ENCODE measurements at regions of chr12 and their contacts with region 1.

Region 1: DNA sequence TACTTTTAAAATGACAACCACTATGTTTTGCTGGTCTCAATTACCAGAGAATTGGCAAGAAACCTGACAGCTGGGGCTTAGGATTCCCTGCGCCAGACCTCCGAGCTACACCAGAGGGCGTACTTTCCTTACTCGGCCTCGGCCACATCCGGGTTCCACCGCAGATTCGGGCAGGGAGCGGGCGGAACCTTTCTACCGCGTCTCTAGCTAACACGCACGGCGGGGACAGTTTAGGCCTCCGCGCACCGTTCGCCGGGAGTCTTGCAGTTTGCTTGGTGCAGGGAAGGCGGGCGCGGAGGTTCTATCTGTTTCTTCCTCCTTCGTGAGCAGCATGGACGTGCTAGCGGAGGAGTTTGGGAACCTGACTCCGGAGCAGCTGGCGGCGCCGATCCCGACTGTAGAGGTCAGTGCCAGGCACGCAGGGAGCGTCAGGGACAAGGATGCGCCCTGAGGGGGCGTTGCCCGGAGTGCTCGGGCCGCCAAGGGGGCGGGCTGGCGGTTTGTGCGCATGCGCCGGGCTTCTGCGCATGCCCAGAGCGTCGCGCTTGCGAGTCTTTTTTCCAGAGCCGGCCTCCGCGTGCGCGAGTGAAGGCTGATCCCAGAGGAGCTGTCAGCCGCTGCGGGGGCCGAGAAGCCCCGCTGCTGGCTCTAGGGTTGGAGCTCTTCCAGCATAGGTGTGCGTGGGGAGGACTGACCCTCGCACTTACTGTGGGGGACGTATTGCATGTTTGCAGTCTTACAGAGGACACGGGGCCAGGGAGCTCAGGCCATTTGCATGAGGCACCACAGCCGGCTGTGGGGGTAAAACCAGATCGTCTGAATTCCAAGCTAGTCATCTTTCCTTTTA is at the start of gene POLR3B:
- DNase-seq: peak in 1 of 2 donors; percentile 95
- H3K4me3 ChIP-seq: peak within 1 kb of the TSS; percentile 53 to 56
- H3K27ac ChIP-seq: peak within 1 kb of the TSS; percentile 75
- H3K4me1 ChIP-seq: peaks cover 16% of the 10 kb centered on the region
- H3K27me3 ChIP-seq: no peaks in the 10 kb centered on the region
- CTCF ChIP-seq: peak in 2 of 3 experiments; percentile 79
- POLR2A ChIP-seq: peak; percentile 29 to 48
- total RNA-seq, gene POLR3B: 10.1 TPM

Region 2: GRCh38 chr12:104966677-104967076 is 1391.1 kb before region 1 on chr12:
- intact Hi-C with region 1: loop called (anchors 5 kb)
- DNase-seq: no peak
- H3K4me3 ChIP-seq: no peak overlapping the region
- H3K27ac ChIP-seq: no peak overlapping the region
- H3K4me1 ChIP-seq: no peaks in the 10 kb centered on the region
- H3K27me3 ChIP-seq: no peaks in the 10 kb centered on the region
- CTCF ChIP-seq: no peak
- POLR2A ChIP-seq: no peak

Region 3: DNA sequence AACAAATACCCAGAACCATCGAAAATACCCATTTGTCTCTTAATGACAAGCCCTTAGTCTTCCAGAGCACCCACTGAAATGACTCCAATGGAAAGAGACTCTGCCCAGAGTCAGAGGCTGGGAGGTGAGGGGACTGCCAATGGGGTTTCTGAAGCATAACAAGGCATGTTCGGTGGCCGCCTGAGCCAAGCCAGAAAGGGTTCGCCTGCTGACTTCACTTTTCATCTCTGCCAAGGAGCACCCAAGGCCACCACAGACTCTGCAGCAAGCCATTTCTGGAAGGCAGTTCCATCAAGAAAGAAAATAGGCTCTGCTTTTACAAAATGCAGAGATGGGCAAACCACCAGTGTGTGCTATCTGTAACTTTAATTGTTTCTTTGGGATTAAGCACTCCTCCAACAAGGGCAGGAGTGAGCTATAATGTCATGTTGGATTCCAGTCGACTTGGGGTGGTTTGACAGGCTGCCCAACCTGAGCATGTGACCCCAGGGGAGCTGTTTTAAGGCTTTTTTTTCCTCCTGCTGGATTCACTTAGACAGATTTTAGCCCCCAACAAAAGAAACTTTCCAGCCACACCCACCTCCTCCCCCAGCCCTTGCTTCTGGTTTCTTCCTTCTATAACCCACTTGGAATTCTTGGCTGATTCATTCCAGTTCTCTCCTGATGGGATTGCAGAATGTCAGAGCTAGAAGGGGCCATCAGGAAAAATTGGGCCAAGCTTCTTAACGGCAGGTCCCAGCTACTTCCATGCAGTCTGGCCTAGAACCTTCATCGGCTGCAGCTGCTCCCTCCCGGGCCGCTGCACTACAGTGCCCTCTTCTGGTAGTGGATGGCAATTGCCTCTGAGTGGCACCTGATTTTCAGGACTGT is 134.1 kb before region 1 on chr12:
- intact Hi-C with region 1: no loop called
- DNase-seq: peak in 1 of 2 donors; percentile 86
- H3K4me3 ChIP-seq: no peak overlapping the region
- H3K27ac ChIP-seq: peak overlapping the region; percentile 66
- H3K4me1 ChIP-seq: peaks cover 28% of the 10 kb centered on the region
- H3K27me3 ChIP-seq: no peaks in the 10 kb centered on the region
- CTCF ChIP-seq: peak; percentile 66 to 94 (median 84)
- POLR2A ChIP-seq: no peak

Region 4: GRCh38 chr12:106282457-106283097 is 75.2 kb before region 1 on chr12:
- intact Hi-C with region 1: no loop called
- DNase-seq: no peak
- H3K4me3 ChIP-seq: no peak overlapping the region
- H3K27ac ChIP-seq: no peak overlapping the region
- H3K4me1 ChIP-seq: no peaks in the 10 kb centered on the region
- H3K27me3 ChIP-seq: no peaks in the 10 kb centered on the region
- CTCF ChIP-seq: peak; percentile 36 to 73 (median 70)
- POLR2A ChIP-seq: no peak

Region 5: DNA sequence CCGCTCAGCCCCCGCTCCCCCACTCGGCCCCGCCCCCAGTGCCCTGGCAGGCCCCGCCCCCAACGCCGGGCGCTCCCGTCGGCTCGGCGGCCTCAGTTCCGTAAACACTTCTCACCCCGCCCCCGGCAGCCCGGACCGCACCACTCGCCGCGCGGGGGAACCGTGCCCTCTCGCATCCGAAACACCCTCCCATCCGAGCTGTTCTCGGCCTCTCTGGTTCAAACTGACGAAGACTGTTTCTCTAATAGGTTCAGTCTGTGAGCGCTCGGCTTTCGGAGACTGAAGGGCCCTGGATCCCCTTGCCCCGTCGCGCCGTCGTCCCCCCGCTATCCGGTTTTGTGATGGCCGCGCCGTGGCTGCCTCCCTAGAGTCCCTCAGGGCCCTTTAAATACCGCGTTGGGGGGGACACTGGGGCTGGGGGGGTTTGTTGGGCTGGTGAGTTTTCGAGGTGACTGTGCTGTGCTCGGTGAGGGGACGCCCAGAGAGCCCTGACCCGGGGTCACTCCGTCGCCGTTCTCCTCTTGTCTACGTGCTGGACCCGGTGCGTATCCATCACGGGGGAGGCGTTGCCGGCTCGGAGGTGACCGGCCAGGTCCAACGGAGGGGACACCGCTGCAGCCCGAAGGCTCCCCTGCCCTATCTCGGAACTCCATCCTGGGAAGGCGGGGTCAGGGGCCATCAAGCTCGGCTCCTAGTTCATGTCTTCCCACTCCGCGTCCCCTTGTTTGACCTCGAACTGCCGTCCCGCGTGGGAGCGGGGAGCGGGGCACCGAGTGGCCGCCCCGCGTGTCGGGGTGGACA is 55.2 kb before region 1 on chr12 and contains the start of gene TCP11L2:
- intact Hi-C with region 1: loop called (anchors 2 kb)
- DNase-seq: no peak
- H3K4me3 ChIP-seq: peak within 1 kb of the TSS; percentile 92 to 96
- H3K27ac ChIP-seq: peak within 1 kb of the TSS; percentile 99
- H3K4me1 ChIP-seq: peaks cover 59% of the 10 kb centered on the region
- H3K27me3 ChIP-seq: no peaks in the 10 kb centered on the region
- CTCF ChIP-seq: no peak
- POLR2A ChIP-seq: peak in 1 of 2 donors; percentile 35
- total RNA-seq, gene TCP11L2: 47.1 TPM

Region 6: DNA sequence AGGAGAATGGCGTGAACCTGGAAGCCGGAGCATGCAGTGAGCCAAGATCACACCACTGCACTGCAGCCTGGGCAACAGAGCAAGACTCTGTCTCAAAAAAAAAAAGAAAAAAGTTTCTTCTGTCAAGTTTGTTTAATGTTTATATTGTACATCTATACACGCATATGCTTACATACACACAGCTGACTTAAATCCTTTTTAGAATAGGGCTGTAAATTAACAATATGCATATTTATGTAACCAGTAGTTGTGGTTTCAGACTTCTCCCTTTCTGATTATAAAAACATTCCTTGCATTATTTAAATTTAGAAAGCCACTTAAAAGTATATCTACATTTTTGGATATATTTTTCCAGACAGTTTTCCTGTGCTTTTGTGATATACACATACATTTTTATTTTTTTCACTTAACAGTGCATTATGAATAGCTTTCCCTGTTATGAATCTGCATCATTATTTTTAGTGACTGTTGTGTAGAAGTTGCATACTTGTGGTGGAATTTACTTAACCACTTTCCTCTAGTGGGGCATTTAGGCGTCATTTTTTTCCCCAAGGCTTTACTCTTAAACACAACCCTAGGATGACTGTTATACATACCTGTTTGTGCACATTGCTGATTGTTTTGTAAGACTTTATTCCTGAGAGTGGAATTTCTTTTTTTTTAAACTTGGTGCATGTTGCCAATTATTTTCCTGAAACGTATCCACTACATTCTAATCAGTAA is 29.2 kb after region 1 on chr12:
- intact Hi-C with region 1: no loop called
- DNase-seq: no peak
- H3K4me3 ChIP-seq: no peak overlapping the region
- H3K27ac ChIP-seq: no peak overlapping the region
- H3K4me1 ChIP-seq: no peaks in the 10 kb centered on the region
- H3K27me3 ChIP-seq: no peaks in the 10 kb centered on the region
- CTCF ChIP-seq: no peak
- POLR2A ChIP-seq: no peak

Region 7: GRCh38 chr12:106455111-106455510 is 97.3 kb after region 1 on chr12:
- intact Hi-C with region 1: no loop called
- DNase-seq: no peak
- H3K4me3 ChIP-seq: no peak overlapping the region
- H3K27ac ChIP-seq: no peak overlapping the region
- H3K4me1 ChIP-seq: peaks cover 5% of the 10 kb centered on the region
- H3K27me3 ChIP-seq: no peaks in the 10 kb centered on the region
- CTCF ChIP-seq: no peak
- POLR2A ChIP-seq: no peak

Measured in vagina (tissue), 2 donors.